Activated naive CD4-positive, alpha-beta T cell treated with anti-CD3 and anti-CD28 coated beads, Interleukin-2, amount 10 ng/mL, durations not matched to agents 7 days and 5 days (primary cell): ENCODE measurements at regions of chr10 and their contacts with region 1.

Region 1: GRCh38 chr10:129030996-129031843 is 435.8 kb upstream of the MGMT start:
- DNase-seq: peak; percentile 71
- H3K4me3 Mint-ChIP-seq: no peak overlapping the region
- H3K27ac Mint-ChIP-seq: peak overlapping the region; percentile 53
- H3K4me1 Mint-ChIP-seq: peaks cover 45% of the 10 kb centered on the region
- H3K27me3 Mint-ChIP-seq: peaks cover 5% of the 10 kb centered on the region

Region 2: DNA sequence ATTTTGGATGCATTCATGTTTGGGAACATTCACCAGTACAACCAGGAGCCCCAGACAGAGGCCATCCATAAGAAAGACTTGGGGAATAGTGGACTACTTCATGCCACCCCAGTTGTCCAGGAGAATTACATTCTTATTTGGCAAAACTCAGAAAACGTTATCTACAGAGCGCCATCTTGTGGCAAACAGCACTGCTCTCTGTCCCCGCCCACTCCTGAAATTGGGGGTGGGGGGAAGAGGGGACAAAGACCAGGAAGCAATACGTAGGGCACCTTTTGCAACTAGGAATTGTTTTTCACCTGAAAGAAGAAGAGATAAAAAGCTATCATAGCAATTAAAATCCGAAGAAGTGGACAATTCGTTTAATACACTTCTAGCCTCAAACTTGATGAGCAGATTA is 301.3 kb after region 1 on chr10:
- CTCF ChIA-PET with region 1: interaction called, 94 read pairs
- DNase-seq: peak; percentile 59
- H3K4me3 Mint-ChIP-seq: no peak overlapping the region
- H3K27ac Mint-ChIP-seq: no peak overlapping the region
- H3K4me1 Mint-ChIP-seq: peaks cover 5% of the 10 kb centered on the region
- H3K27me3 Mint-ChIP-seq: peaks cover 29% of the 10 kb centered on the region